Activated T-helper 1 cell treated with anti-CD3 and anti-CD28 coated beads, Interleukin-12 subunit alpha, Interleukin-12 subunit beta, Interleukin-2, Interleukin-4 antibody, amounts not matched to agents 30 ng/mL and 10 ng/mL and 1 ng/mL, durations not matched to agents 14 hours and 24 hours and 36 hours (primary cell): ENCODE measurements at regions of chr11 and their contacts with region 1.

Region 1: GRCh38 chr11:111454561-111455192 is 57.5 kb downstream of the BTG4 start:
- DNase-seq: peak; percentile 16
- H3K4me3 Mint-ChIP-seq: no peak overlapping the region
- H3K27ac Mint-ChIP-seq: no peak overlapping the region
- H3K4me1 Mint-ChIP-seq: no peaks in the 10 kb centered on the region
- H3K27me3 Mint-ChIP-seq: peaks cover 7% of the 10 kb centered on the region

Region 2: DNA sequence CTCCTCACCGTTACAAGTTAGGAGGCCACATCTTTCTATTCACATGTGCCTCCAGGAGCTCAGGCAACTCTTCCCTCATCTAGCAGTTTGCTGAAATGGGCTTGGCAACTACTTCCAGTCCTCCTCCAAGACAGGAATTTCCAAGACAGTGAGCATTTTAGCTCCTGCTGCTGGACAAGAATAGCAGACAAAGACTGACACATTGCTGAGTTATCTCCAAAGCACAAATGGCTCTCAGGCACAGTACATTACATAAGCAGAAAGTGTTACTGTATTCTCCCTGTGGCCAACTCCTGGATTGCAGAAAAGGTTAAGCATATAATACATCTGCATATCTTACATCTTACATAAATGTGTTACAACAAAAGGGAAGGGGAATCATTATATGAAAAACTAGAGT is 292.4 kb before region 1 on chr11:
- intact Hi-C with region 1: no loop called
- DNase-seq: no peak
- H3K4me3 Mint-ChIP-seq: no peak overlapping the region
- H3K27ac Mint-ChIP-seq: no peak overlapping the region
- H3K4me1 Mint-ChIP-seq: no peaks in the 10 kb centered on the region
- H3K27me3 Mint-ChIP-seq: peaks cover 10% of the 10 kb centered on the region

Region 3: DNA sequence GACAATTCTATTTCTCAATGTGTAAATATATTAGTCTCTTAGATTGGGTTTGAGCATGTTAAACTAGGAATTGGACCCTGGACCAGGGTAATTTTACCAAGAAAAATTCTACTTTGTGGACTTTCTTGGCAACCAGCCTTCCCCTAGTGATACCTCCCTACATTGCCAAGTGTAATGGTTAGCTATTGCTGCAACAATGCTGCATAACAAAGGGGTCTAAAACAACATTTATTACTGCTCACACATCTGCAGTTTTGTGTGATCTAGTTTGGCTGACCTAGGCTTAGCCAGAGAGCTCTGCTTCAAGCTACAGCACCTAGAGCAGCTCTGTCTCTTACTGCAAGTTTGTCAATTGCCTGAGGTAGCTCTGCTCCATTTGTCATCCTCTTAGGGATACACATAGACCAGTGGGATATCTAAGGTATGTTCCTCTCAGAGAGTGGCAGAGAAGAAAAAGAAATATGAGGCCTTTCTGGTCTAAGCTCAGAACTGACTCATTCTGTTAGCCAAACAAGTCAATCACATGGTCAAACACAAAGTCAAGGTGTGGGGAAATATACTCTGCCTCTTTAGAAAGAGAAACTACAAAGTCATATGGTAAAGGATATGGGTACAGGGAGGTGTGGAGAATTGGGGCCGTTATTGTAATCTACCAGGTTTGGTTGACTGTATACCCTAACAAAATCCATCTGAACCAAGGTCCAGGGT is 83.9 kb after region 1 on chr11:
- intact Hi-C with region 1: loop called (anchors 1 kb)
- DNase-seq: no peak
- H3K4me3 Mint-ChIP-seq: peak overlapping the region; percentile 38
- H3K27ac Mint-ChIP-seq: peak overlapping the region; percentile 84
- H3K4me1 Mint-ChIP-seq: peaks cover 48% of the 10 kb centered on the region
- H3K27me3 Mint-ChIP-seq: peaks cover 50% of the 10 kb centered on the region

Region 4: DNA sequence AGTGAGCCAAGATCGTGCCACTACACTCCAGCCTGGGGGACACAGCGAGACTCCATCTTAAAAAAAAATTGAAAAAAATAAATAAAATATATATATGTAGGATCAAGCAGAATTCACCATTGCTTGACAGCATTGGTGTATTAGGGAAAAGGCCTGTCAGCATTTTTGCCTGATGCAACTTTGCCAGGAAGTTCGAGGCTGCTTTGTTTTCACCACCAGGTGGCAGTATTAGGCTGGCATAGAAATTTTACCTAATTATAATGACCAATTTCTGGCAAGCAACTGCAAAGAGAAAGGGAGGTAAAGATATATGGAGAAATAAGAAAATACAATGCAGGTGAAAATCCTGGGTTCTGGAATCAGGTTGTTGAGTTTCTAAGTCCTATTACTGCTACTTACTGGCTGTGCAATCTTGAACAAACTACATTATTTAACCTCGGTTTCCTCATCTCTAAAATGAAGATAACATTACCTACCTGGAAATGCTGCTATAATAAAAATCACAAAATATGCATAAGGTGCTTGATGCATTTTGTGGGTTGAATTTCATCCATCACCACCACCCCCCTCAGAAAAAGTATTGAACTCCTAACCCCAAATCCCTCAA is 110.5 kb after region 1 on chr11:
- intact Hi-C with region 1: loop called (anchors 1 kb)
- DNase-seq: peak; percentile 28
- H3K4me3 Mint-ChIP-seq: no peak overlapping the region
- H3K27ac Mint-ChIP-seq: no peak overlapping the region
- H3K4me1 Mint-ChIP-seq: no peaks in the 10 kb centered on the region
- H3K27me3 Mint-ChIP-seq: no peaks in the 10 kb centered on the region

Region 5: DNA sequence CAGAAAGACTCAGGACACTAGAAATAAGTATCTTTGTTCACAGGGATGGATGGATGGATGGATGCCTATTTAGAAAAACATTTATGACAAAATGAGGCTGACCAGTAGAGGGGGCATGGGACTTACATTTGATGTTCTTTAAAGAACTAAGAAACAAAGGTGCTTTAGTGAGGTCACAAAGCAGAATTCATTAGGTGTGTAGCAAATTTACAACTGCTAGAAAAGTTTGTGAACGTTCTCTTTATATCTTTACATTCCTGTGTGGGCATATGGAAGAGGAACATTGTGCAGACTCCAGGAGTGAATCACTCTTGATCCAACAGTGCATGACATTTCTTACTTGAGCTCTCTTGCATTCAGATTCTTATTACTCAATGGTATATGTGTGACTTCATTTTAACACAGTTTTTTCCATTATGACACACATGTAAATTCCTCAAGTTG is 131.7 kb after region 1 on chr11:
- intact Hi-C with region 1: loop called (anchors 1 kb)
- DNase-seq: no peak
- H3K4me3 Mint-ChIP-seq: no peak overlapping the region
- H3K27ac Mint-ChIP-seq: no peak overlapping the region
- H3K4me1 Mint-ChIP-seq: no peaks in the 10 kb centered on the region
- H3K27me3 Mint-ChIP-seq: peaks cover 6% of the 10 kb centered on the region

Region 6: GRCh38 chr11:111841370-111842053 is 386.8 kb after region 1 on chr11:
- intact Hi-C with region 1: loop called (anchors 1 kb)
- DNase-seq: peak; percentile 70
- H3K4me3 Mint-ChIP-seq: no peak overlapping the region
- H3K27ac Mint-ChIP-seq: no peak overlapping the region
- H3K4me1 Mint-ChIP-seq: peaks cover 16% of the 10 kb centered on the region
- H3K27me3 Mint-ChIP-seq: no peaks in the 10 kb centered on the region

Region 7: GRCh38 chr11:112302231-112302732 is 847.6 kb after region 1 on chr11:
- intact Hi-C with region 1: no loop called
- DNase-seq: no peak
- H3K4me3 Mint-ChIP-seq: no peak overlapping the region
- H3K27ac Mint-ChIP-seq: no peak overlapping the region
- H3K4me1 Mint-ChIP-seq: peaks cover 19% of the 10 kb centered on the region
- H3K27me3 Mint-ChIP-seq: no peaks in the 10 kb centered on the region